ENCODE measurements at regions of chr18 and their contacts with region 1.

Region 1: GRCh38 chr18:59837586-59837985 is 62.2 kb upstream of the PMAIP1 start:
- DNase-seq: peak in 7 of 9 experiments; percentile 24 to 70 (median 46)
- ATAC-seq: no peak
- H3K4me3 ChIP-seq: no peak overlapping the region
- H3K4me3 Mint-ChIP-seq: no peak overlapping the region
- H3K27ac ChIP-seq: no peak overlapping the region
- H3K27ac Mint-ChIP-seq: no peak overlapping the region
- H3K4me1 ChIP-seq: no peaks in the 10 kb centered on the region
- H3K4me1 Mint-ChIP-seq: no peaks in the 10 kb centered on the region
- H3K27me3 ChIP-seq: no peaks in the 10 kb centered on the region
- H3K27me3 Mint-ChIP-seq: peaks cover 4% of the 10 kb centered on the region
- CTCF ChIP-seq: peak; percentile 91

Region 2: DNA sequence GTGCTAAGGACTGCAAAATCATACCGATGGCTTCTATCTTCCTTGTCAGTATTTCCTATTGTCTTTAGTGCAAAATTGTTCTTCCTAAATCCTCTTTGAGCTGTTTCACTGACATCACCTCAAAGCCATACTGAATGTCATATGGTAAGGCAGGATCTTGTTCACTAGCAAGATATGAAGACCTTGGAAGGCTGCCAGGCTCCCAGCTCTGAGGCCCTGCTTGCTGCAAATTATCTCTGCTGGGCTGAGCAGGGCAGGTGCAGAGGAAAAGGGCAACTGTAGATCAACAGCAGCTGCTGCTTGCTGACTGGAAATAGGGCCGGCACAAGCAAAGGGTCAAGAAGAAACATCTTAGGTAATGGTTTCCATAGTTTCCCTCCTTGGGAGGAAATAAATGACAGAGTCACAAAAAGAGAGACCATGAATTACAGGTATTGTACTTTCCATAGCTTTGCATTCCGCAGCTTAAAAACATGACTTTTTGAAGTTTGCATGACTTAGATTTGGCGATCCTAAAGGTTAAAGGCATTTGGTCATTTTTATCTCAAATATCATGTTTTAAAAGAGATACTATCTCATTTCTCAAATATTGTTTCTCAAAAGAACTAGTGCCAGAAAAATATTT is 120.5 kb after region 1 on chr18:
- CTCF ChIA-PET with region 1: interaction called, 3 read pairs
- POLR2A ChIA-PET with region 1: no interaction called
- intact Hi-C with region 1: loop called in 1 of 2 experiments (anchors 10 kb)
- DNase-seq: no peak
- ATAC-seq: no peak
- H3K4me3 ChIP-seq: no peak overlapping the region
- H3K4me3 Mint-ChIP-seq: no peak overlapping the region
- H3K27ac ChIP-seq: no peak overlapping the region
- H3K27ac Mint-ChIP-seq: no peak overlapping the region
- H3K4me1 ChIP-seq: no peaks in the 10 kb centered on the region
- H3K4me1 Mint-ChIP-seq: no peaks in the 10 kb centered on the region
- H3K27me3 ChIP-seq: no peaks in the 10 kb centered on the region
- H3K27me3 Mint-ChIP-seq: no peaks in the 10 kb centered on the region
- CTCF ChIP-seq: no peak